Dorsolateral prefrontal cortex (tissue), 120 donors: ENCODE measurements at regions of chr4 and their contacts with region 1.

Region 1: GRCh38 chr4:163484906-163485305 is 9.6 kb upstream of the TMA16 start:
- DNase-seq: peak in 4 of 10 donors; percentile 10 to 52 (median 38)
- H3K4me3 ChIP-seq: no peak overlapping the region
- H3K27ac ChIP-seq: no peak overlapping the region
- H3K27me3 ChIP-seq: no peaks in the 10 kb centered on the region
- CTCF ChIP-seq: peak; percentile 24 to 83 (median 64)

Region 2: GRCh38 chr4:163544407-163545038 is 59.6 kb after region 1 on chr4:
- intact Hi-C with region 1: loop called (anchors 2 kb)
- DNase-seq: peak in 9 of 10 donors; percentile 45 to 70 (median 57)
- H3K4me3 ChIP-seq: peak overlapping the region in 55 of 59 donors; percentile 15 to 63 (median 41)
- H3K27ac ChIP-seq: peak overlapping the region in 6 of 59 donors; percentile 1 to 52 (median 16)
- H3K27me3 ChIP-seq: no peaks in the 10 kb centered on the region
- CTCF ChIP-seq: peak; percentile 77 to 97 (median 91)

Region 3: DNA sequence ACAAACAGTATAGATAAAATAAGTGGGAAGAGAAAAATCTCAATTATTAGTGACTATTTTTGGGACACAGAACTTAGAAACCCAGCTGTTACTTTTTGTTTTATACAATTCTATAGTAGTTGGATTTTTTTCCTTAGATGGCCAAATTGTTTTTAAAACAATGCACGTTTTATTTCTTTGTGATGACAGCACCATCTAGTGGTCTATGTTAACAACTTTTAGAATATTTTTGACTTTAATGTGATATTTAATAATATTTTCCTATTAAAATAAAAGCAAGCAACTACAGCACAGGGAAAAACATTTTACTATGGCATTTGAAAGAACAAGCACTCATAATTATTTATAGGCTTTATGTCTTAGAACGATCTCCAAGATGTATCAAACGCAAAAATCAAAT is 1263.5 kb after region 1 on chr4:
- intact Hi-C with region 1: loop called in 1 of 2 experiments (anchors 5 kb)
- DNase-seq: no peak
- H3K4me3 ChIP-seq: no peak overlapping the region
- H3K27ac ChIP-seq: no peak overlapping the region
- H3K27me3 ChIP-seq: no peaks in the 10 kb centered on the region
- CTCF ChIP-seq: peak; percentile 39 to 79 (median 64)